ENCODE measurements at regions of chr9 and their contacts with region 1.

Region 1: DNA sequence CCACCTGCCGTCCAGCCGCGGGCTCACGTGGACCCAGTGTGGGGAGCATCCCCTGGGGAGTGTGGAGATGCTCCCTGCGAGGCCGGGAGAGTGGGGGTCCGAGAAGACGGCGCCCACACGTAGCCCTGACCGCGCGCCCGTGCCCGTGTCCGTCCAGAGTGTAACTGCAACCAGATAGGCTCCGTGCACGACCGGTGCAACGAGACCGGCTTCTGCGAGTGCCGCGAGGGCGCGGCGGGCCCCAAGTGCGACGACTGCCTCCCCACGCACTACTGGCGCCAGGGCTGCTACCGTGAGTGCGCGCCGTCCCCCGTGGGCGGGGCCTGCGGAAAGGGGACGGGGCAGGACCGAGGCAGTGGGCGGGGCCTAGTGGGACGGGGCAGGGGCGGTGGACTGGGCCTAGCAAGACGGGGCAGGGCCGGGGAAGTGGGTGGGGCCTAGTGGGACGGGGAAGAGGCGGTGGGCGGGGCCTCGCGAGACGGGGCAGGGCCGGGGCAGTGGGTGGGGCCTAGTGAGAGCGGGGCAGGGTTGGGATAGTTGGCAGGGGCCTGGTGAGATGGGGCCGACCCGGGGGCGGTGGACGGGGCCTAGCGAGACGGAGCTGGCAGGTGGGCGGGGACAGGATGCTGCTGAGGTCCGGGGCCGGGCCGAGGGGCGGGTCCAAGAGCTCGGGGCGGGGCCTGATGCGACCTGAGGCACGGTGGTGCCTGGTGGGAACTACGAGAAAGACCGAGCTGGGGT is 79.1 kb downstream of the NTNG2 start:
- DNase-seq: peak; percentile 99
- H3K27ac ChIP-seq: no peak overlapping the region
- CTCF ChIP-seq: no peak

Region 2: DNA sequence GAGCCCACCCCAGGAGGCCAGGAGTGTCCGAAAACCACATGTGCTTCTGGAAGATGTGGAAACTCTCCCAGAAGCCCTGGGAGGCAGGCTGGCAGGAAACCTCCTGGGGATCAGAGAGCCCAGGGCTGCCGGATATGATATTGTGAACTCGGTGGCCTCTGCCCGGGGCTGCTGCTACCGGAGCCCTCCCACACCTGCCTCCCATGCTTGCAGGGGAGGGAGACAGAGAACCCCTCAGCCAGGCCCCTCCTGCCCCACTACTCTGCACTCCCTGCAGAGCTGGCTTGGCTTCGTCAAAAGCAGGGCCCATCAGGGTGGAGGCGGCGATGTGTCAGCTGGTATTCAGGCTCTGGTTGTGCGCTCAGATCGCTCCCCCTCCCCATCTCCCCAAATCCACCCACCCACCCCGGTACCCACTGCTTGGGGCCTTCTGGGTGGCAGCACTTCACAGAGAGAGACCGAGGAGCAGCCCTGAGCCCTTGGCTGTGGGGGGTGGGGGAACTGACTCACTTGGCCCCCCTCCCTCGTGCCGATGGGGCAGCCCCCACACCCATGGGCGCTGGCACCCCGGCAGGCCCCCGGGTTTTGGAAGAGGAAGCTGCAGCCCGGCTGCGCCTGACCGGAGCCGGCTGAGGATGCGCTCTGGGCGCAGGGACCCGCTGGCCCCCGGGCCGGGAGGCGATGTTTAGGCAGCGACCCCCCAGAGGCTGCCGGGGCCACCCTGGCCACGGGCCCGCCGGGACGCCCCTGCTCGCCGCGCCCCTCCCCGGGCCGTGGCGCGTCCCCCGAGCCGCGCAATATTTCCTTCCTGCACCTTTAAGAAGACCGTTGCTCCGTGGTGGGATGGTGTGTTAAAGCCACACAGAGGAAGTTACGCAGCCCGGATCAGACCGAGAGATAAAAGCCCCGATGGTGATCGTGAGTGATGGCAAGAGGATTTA is 79.9 kb before region 1 on chr9:
- CTCF ChIA-PET with region 1: interaction called, 10 read pairs
- POLR2A ChIA-PET with region 1: no interaction called
- DNase-seq: peak; percentile 40
- H3K27ac ChIP-seq: no peak overlapping the region
- CTCF ChIP-seq: no peak

Region 3: GRCh38 chr9:132169672-132170392 is 71.1 kb before region 1 on chr9:
- CTCF ChIA-PET with region 1: interaction called, 44 read pairs
- POLR2A ChIA-PET with region 1: no interaction called
- DNase-seq: peak; percentile 68
- H3K27ac ChIP-seq: no peak overlapping the region
- CTCF ChIP-seq: peak; percentile 98

Measured in RWPE1 (cell line).